MCF 10A (cell line): ENCODE measurements at regions of chr10 and their contacts with region 1.

Region 1: DNA sequence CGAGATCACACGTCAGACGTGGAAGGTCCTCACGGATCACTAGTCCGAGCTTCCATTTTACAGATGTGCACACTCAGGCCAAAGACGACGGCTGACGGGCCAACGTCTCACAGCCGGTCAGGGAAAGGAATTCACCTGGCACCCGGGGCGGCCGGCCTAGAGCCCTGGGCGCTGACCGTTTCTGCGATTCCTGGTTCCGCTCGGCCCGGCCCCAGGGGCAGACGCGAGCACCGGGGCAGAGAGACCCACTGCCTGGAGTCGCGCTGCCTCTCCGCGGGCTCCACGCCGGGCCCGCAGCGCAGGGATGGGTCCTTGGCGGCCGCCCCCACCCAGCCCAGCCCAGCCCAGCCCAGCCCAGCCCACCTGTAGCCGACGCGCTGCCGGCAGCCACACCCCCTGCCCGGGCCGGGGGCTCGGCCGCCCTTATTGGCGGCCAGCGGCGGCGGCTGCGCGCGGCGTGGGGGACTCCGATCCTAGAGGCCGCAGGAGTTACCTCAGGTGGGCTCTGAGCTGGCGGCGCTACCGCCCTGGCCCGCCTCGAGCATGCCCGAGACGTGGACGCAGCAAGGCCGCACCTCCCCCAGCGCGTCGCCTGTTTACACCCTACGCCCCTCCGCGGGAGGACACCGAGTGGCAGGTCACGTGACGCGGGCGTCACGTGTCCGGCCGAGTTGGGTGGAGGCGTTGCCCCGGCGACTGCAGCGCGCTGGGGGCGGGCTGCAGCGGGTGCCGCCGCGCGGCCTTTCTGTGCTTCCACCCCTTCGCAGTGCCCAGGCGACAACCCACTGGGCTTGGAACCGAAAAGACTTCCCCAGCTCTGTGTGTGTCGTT is 78.1 kb downstream of the ZFAND4 start:
- DNase-seq: peak; percentile 89
- H3K4me3 Mint-ChIP-seq: peak overlapping the region; percentile 86
- H3K27ac Mint-ChIP-seq: peak overlapping the region; percentile 77
- H3K4me1 Mint-ChIP-seq: peaks cover 21% of the 10 kb centered on the region
- H3K27me3 Mint-ChIP-seq: no peaks in the 10 kb centered on the region
- CTCF ChIP-seq: no peak

Region 2: GRCh38 chr10:45370202-45370955 is 224.1 kb before region 1 on chr10:
- CTCF ChIA-PET with region 1: no interaction called
- POLR2A ChIA-PET with region 1: no interaction called
- intact Hi-C with region 1: no loop called
- DNase-seq: no peak
- H3K4me3 Mint-ChIP-seq: no peak overlapping the region
- H3K27ac Mint-ChIP-seq: no peak overlapping the region
- H3K4me1 Mint-ChIP-seq: no peaks in the 10 kb centered on the region
- H3K27me3 Mint-ChIP-seq: peaks cover 55% of the 10 kb centered on the region
- CTCF ChIP-seq: no peak

Region 3: GRCh38 chr10:45380903-45381620 is 213.4 kb before region 1 on chr10:
- CTCF ChIA-PET with region 1: no interaction called
- POLR2A ChIA-PET with region 1: no interaction called
- intact Hi-C with region 1: no loop called
- DNase-seq: peak; percentile 22
- H3K4me3 Mint-ChIP-seq: no peak overlapping the region
- H3K27ac Mint-ChIP-seq: no peak overlapping the region
- H3K4me1 Mint-ChIP-seq: no peaks in the 10 kb centered on the region
- H3K27me3 Mint-ChIP-seq: peaks cover 14% of the 10 kb centered on the region
- CTCF ChIP-seq: no peak

Region 4: GRCh38 chr10:45580371-45581215 is 13.9 kb before region 1 on chr10:
- CTCF ChIA-PET with region 1: no interaction called
- POLR2A ChIA-PET with region 1: interaction called, 13 read pairs
- intact Hi-C with region 1: no loop called
- DNase-seq: no peak
- H3K4me3 Mint-ChIP-seq: peak overlapping the region; percentile 52
- H3K27ac Mint-ChIP-seq: peak overlapping the region; percentile 62
- H3K4me1 Mint-ChIP-seq: peaks cover 11% of the 10 kb centered on the region
- H3K27me3 Mint-ChIP-seq: no peaks in the 10 kb centered on the region
- CTCF ChIP-seq: no peak

Region 5: GRCh38 chr10:45614869-45615268 is 20.4 kb after region 1 on chr10:
- CTCF ChIA-PET with region 1: no interaction called
- POLR2A ChIA-PET with region 1: no interaction called
- intact Hi-C with region 1: no loop called
- DNase-seq: no peak
- H3K4me3 Mint-ChIP-seq: no peak overlapping the region
- H3K27ac Mint-ChIP-seq: no peak overlapping the region
- H3K4me1 Mint-ChIP-seq: no peaks in the 10 kb centered on the region
- H3K27me3 Mint-ChIP-seq: no peaks in the 10 kb centered on the region
- CTCF ChIP-seq: no peak

Region 6: GRCh38 chr10:45672181-45673073 is 77.9 kb after region 1 on chr10 and contains the start of gene ZFAND4:
- CTCF ChIA-PET with region 1: interaction called, 3 read pairs
- POLR2A ChIA-PET with region 1: interaction called, 6 read pairs
- intact Hi-C with region 1: loop called (anchors 2 kb)
- DNase-seq: peak; percentile 94
- H3K4me3 Mint-ChIP-seq: peak within 1 kb of the TSS; percentile 81
- H3K27ac Mint-ChIP-seq: peak within 1 kb of the TSS; percentile 70
- H3K4me1 Mint-ChIP-seq: no peaks in the 10 kb centered on the region
- H3K27me3 Mint-ChIP-seq: no peaks in the 10 kb centered on the region
- CTCF ChIP-seq: peak; percentile 55
- total RNA-seq, gene ZFAND4: 4.9 and 5.0 TPM in 2 replicates